Common myeloid progenitor, CD34-positive (primary cell): ENCODE measurements at regions of chr3 and their contacts with region 1.

Region 1: DNA sequence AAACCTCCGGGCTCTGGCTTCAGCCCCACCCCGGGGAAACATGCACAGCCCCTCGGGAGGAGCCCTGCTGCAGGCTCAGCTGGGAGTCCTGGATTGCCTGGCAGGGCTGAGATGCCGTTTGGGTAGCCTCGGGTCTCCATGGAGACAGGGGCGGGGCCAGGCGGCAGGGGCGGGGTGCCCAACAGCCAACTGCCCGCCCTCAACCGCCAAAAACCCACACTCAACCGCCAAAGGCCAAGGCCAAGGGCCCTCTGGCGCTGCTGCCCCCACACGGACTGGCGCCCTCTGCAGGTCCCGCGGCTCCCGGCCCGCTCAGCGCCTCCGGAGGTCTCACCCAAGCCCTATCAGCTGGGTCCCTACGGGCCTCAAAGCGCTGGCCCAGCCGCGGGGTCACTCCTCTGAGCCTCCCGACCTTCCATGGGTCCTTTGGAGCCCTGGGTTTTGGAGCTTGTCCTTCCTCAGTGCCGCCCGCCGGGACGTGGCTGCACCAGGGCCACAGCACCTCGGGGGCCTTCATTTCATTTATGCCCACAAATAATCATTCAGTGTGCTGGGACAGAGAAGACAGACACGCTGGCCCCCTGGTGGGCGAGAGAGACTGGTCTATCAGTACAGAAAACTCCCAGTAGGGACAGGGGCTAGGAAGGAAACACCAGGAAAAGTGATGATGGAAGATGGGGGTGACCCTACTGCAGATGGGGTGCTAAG is 33.5 kb upstream of the ACAD9 start:
- DNase-seq: peak; percentile 89 to 95 (median 95)
- H3K4me3 ChIP-seq: peak overlapping the region in 6 of 7 experiments; percentile 25 to 71 (median 52)
- H3K27ac ChIP-seq: peak overlapping the region; percentile 70 to 80
- H3K4me1 ChIP-seq: peaks cover 0 to 55% (median 36%) of the 10 kb centered on the region in 4 experiments
- H3K27me3 ChIP-seq: no peaks in the 10 kb centered on the region

Region 2: DNA sequence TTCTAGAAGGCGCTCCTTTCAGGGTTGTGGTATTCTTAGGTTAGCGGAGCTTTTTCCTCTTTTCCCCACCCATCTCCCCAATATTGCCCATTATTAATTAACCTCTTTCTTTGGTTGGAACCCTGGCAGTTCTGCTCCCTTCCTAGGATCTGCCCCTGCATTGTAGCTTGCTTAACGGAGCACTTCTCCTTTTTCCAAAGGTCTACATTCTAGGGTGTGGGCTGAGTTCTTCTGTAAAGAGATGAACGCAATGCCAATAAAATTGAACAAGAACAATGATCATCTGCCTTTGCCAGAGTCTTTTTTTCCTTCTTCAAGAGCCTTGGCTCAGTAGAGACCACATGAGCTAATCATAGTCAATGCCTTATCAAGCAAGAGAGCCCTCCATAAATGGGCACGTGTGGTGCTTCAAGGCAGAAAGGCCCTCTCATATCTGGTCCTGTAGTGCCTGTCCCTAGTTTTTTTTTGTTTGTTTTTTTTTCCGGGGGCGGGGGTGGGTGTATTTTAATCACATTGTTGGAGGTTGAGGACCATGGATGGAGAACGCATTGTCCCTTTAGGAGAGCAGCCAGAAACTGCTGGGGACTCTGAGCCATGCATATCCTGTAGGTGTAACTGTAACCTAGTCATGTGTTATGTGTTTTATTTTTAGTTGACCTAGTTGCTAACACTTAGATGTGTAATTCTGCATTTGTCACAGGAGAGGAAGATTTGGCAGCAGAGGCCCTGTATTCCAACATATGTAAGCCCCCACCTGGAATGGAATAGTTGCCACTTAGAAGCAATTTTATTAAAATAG is 31.2 kb before region 1 on chr3:
- CTCF ChIA-PET with region 1: interaction called, 20 read pairs
- POLR2A ChIA-PET with region 1: no interaction called
- DNase-seq: no peak
- H3K4me3 ChIP-seq: no peak overlapping the region
- H3K27ac ChIP-seq: no peak overlapping the region
- H3K4me1 ChIP-seq: peaks cover 0 to 10% (median 2%) of the 10 kb centered on the region in 4 experiments
- H3K27me3 ChIP-seq: no peaks in the 10 kb centered on the region

Region 3: DNA sequence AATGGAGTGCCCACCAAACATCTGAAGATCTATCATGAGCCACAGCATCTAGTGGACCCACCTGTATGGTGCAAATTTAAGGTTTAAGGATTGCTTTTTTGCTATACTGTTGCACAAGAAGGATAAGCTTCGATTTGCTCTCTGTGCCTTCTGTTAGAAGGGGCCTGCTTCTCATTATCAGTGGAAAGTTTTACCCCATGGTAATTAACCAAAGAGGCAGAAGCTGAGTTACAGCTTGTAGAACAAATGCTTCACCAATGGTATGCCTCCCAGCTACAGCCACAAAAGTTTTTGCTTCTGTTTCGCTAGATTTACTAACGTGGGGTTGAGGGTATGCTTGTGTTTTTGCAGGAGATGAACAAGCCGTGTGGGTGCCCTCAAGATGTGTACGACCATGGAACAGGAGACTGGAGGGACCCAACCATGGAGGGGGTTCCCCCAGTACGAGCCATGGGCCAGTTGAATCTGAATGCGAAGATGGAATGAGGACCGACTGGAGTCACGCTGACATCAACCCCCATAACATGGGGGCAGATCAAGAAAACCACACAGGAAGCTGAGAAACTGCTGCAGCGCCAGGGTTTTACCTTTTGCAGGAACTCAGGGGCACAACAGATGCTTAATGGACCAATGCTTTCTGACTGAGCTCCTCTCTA is 77.0 kb after region 1 on chr3:
- CTCF ChIA-PET with region 1: no interaction called
- POLR2A ChIA-PET with region 1: no interaction called
- DNase-seq: peak; percentile 20 to 83 (median 80)
- H3K4me3 ChIP-seq: peak overlapping the region in 4 of 7 experiments; percentile 1 to 64 (median 28)
- H3K27ac ChIP-seq: no peak overlapping the region
- H3K4me1 ChIP-seq: peaks cover 0 to 17% (median 14%) of the 10 kb centered on the region in 4 experiments
- H3K27me3 ChIP-seq: no peaks in the 10 kb centered on the region

Region 4: DNA sequence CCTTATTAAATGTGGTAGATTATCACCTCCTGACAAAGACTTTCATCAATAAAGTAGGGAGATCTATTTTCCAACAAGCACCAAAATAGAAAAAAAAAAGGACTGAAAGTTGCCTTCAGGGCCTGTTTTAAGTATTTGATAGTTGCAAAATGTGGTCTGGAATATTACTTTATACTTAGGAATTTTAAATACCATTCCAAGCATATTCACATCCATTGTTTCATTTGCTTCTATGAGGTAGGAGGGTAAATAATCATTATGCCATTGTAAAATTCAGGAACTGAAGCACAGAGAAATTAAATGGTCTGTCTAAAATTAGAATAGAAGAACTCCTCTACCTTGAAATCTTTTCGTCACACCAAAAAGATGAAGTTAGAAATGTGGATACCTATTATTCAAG is 937.5 kb after region 1 on chr3:
- CTCF ChIA-PET with region 1: no interaction called
- POLR2A ChIA-PET with region 1: no interaction called
- DNase-seq: no peak
- H3K4me3 ChIP-seq: no peak overlapping the region
- H3K27ac ChIP-seq: no peak overlapping the region
- H3K4me1 ChIP-seq: no peaks in the 10 kb centered on the region
- H3K27me3 ChIP-seq: no peaks in the 10 kb centered on the region